Heart right ventricle (tissue), 16 donors: ENCODE measurements at regions of chr2 and their contacts with region 1.

Region 1: DNA sequence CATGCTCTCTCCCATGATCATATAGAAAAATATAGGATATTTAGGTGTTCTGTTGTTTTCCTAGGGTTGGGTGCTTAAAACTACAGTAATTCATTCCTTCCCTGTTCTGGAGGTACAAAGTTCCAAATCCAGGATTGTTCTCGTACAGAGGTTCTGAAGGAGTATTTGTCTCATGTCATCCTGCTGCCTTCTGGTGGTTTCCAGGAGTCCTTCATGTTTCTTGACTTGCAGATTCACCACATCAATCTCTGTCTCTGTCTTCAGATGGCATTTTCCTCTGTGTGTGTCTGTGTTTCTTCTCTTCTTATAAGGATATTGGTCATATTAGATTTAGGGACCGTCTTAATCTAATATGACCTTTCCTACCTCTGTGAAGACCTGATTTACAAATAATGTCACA is 397.9 kb downstream of the NYAP2 start:
- DNase-seq: no peak
- ATAC-seq: no peak
- H3K4me3 ChIP-seq: no peak overlapping the region
- H3K27ac ChIP-seq: no peak overlapping the region
- H3K4me1 ChIP-seq: no peaks in the 10 kb centered on the region
- H3K27me3 ChIP-seq: peaks cover 0 to 4% (median 0%) of the 10 kb centered on the region in 7 donors
- CTCF ChIP-seq: peak in 5 of 9 donors; percentile 18 to 44 (median 38)

Region 2: DNA sequence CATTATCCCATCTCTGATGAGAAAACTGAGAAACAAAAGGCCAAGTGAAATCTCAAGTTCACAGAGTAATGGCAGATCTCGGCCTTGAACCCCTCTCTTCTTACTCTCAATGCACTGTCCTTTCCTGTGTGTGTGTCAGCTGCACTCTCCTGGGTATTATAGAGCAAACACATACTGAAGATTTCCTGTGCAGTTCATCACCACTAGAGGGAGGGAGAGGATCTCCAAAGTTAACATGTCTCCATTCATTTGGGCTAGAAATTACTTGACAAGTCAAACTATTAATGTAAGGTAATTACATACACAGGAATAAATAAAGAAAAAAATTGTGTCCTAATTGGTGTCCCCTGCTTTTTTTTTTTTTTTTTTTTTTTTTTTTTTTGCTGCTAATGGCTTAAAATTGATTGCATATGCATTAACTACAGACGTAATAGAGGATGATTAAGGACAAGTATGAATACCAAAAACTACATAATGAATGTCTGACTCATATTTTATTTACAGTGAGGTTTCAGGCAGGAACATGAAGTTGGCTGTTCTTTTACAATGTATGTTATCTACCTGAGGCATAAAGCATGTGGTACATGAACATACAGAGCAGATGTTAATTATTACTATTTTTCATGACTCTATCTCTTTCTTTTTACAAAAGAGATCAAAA is 128.7 kb before region 1 on chr2:
- intact Hi-C with region 1: loop called in 1 of 10 experiments (anchors 5 kb)
- DNase-seq: peak in 1 of 2 donors; percentile 6
- ATAC-seq: peak in 3 of 8 donors; percentile 53 to 70 (median 64)
- H3K4me3 ChIP-seq: no peak overlapping the region
- H3K27ac ChIP-seq: no peak overlapping the region
- H3K4me1 ChIP-seq: no peaks in the 10 kb centered on the region
- H3K27me3 ChIP-seq: peaks cover 0 to 11% (median 0%) of the 10 kb centered on the region in 7 donors
- CTCF ChIP-seq: peak in 8 of 9 donors; percentile 26 to 72 (median 64)

Region 3: GRCh38 chr2:225693259-225693658 is 104.1 kb before region 1 on chr2:
- intact Hi-C with region 1: loop called in 1 of 10 experiments (anchors 5 kb)
- DNase-seq: no peak
- ATAC-seq: no peak
- H3K4me3 ChIP-seq: no peak overlapping the region
- H3K27ac ChIP-seq: no peak overlapping the region
- H3K4me1 ChIP-seq: no peaks in the 10 kb centered on the region
- H3K27me3 ChIP-seq: no peaks in the 10 kb centered on the region
- CTCF ChIP-seq: no peak

Region 4: GRCh38 chr2:225766431-225766830 is 31.0 kb before region 1 on chr2:
- intact Hi-C with region 1: no loop called
- DNase-seq: no peak
- ATAC-seq: no peak
- H3K4me3 ChIP-seq: no peak overlapping the region
- H3K27ac ChIP-seq: no peak overlapping the region
- H3K4me1 ChIP-seq: no peaks in the 10 kb centered on the region
- H3K27me3 ChIP-seq: no peaks in the 10 kb centered on the region
- CTCF ChIP-seq: no peak

Region 5: GRCh38 chr2:225842945-225843344 is 45.6 kb after region 1 on chr2:
- intact Hi-C with region 1: no loop called
- DNase-seq: no peak
- ATAC-seq: no peak
- H3K4me3 ChIP-seq: no peak overlapping the region
- H3K27ac ChIP-seq: no peak overlapping the region
- H3K4me1 ChIP-seq: no peaks in the 10 kb centered on the region
- H3K27me3 ChIP-seq: no peaks in the 10 kb centered on the region
- CTCF ChIP-seq: no peak

Region 6: GRCh38 chr2:226030788-226031646 is 233.6 kb after region 1 on chr2:
- intact Hi-C with region 1: no loop called
- DNase-seq: peak; percentile 57 to 62
- ATAC-seq: peak; percentile 89 to 96 (median 95)
- H3K4me3 ChIP-seq: peak overlapping the region; percentile 39 to 64 (median 61)
- H3K27ac ChIP-seq: peak overlapping the region; percentile 23 to 77 (median 46)
- H3K4me1 ChIP-seq: peaks cover 0 to 19% (median 13%) of the 10 kb centered on the region in 9 donors
- H3K27me3 ChIP-seq: peaks cover 0 to 4% (median 0%) of the 10 kb centered on the region in 7 donors
- CTCF ChIP-seq: no peak